Heart right ventricle (tissue), 16 donors: ENCODE measurements at regions of chr3 and their contacts with region 1.

Region 1: GRCh38 chr3:188954590-188955208 is 217.1 kb upstream of the TPRG1 start:
- DNase-seq: peak; percentile 81 to 91
- ATAC-seq: peak; percentile 75 to 90 (median 86)
- H3K4me3 ChIP-seq: no peak overlapping the region
- H3K27ac ChIP-seq: peak overlapping the region in 3 of 10 donors; percentile 9 to 71 (median 28)
- H3K4me1 ChIP-seq: peaks cover 0 to 47% (median 32%) of the 10 kb centered on the region in 9 donors
- H3K27me3 ChIP-seq: no peaks in the 10 kb centered on the region
- CTCF ChIP-seq: peak in 8 of 9 donors; percentile 81 to 98 (median 96)

Region 2: GRCh38 chr3:188037216-188037718 is 917.4 kb before region 1 on chr3:
- intact Hi-C with region 1: loop called in 3 of 10 experiments (anchors 5 to 10 kb)
- DNase-seq: peak in 1 of 2 donors; percentile 28
- ATAC-seq: peak; percentile 66 to 92 (median 86)
- H3K4me3 ChIP-seq: peak overlapping the region in 4 of 10 donors; percentile 3 to 24 (median 16)
- H3K27ac ChIP-seq: peak overlapping the region in 8 of 10 donors; percentile 26 to 70 (median 54)
- H3K4me1 ChIP-seq: peaks cover 0 to 19% (median 13%) of the 10 kb centered on the region in 9 donors
- H3K27me3 ChIP-seq: no peaks in the 10 kb centered on the region
- CTCF ChIP-seq: peak; percentile 18 to 67 (median 50)

Region 3: DNA sequence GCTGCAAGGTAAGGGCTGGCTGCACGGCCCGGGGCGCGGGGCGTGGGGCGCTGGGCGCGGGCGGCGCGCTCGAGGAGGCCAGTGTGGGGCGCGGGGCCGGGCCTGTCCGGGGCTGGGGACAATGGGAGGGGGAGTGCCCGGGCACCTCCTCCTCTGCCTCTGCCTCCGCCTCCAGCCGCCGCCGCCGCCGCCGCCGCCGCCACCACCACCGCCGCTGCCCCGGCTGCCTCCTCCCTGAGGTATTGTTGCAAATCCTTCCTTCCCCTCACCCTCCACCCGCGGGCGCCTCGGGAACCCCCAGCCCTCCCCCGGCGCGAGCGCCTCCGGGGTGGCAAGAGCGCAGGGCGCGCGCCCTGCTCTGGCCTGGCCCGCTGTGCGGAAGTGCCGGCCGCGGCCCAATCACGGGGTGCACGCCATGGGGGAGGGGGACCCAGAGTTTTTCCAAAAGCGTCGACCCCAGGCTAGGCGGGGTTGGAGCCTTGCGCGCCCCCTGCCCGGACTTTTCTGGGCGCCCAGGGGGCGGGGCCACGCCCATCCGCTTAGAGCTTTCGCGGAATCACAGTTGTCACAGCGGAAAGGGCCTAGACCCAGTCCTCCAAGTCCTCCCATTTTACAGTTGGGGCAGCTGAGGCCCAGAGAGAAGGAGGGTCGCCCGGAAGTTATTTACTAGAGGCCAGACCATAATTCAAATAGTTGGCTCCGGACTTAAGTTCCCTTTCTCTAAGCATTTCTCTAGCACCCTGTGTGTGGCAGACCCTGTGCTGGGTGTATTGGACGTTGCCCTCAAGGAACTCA is 800.5 kb before region 1 on chr3 and contains the start of gene LPP:
- intact Hi-C with region 1: loop called in 6 of 10 experiments (anchors 2 to 10 kb)
- DNase-seq: peak; percentile 76 to 82
- ATAC-seq: peak; percentile 72 to 93 (median 82)
- H3K4me3 ChIP-seq: peak within 1 kb of the TSS; percentile 66 to 92 (median 80)
- H3K27ac ChIP-seq: peak within 1 kb of the TSS; percentile 90 to 99 (median 96)
- H3K4me1 ChIP-seq: peaks cover 0 to 67% (median 54%) of the 10 kb centered on the region in 9 donors
- H3K27me3 ChIP-seq: no peaks in the 10 kb centered on the region
- CTCF ChIP-seq: peak in 2 of 9 donors; percentile 23 to 26
- total RNA-seq, gene LPP: 116 to 188 (median 148) TPM

Region 4: GRCh38 chr3:188286087-188286513 is 668.6 kb before region 1 on chr3:
- intact Hi-C with region 1: loop called in 1 of 10 experiments (anchors 10 kb)
- DNase-seq: peak in 1 of 2 donors; percentile 59
- ATAC-seq: peak; percentile 70 to 93 (median 81)
- H3K4me3 ChIP-seq: no peak overlapping the region
- H3K27ac ChIP-seq: peak overlapping the region; percentile 20 to 85 (median 74)
- H3K4me1 ChIP-seq: peaks cover 15 to 85% (median 65%) of the 10 kb centered on the region in 9 donors
- H3K27me3 ChIP-seq: no peaks in the 10 kb centered on the region
- CTCF ChIP-seq: no peak

Region 5: GRCh38 chr3:188348435-188349244 is 606.1 kb before region 1 on chr3:
- intact Hi-C with region 1: loop called in 5 of 10 experiments (anchors 2 to 10 kb)
- DNase-seq: peak; percentile 69 to 74
- ATAC-seq: peak; percentile 71 to 83 (median 76)
- H3K4me3 ChIP-seq: no peak overlapping the region
- H3K27ac ChIP-seq: peak overlapping the region; percentile 23 to 81 (median 63)
- H3K4me1 ChIP-seq: peaks cover 8 to 70% (median 45%) of the 10 kb centered on the region in 9 donors
- H3K27me3 ChIP-seq: no peaks in the 10 kb centered on the region
- CTCF ChIP-seq: no peak

Region 6: GRCh38 chr3:188749010-188749617 is 205.6 kb before region 1 on chr3:
- intact Hi-C with region 1: no loop called
- DNase-seq: no peak
- ATAC-seq: no peak
- H3K4me3 ChIP-seq: no peak overlapping the region
- H3K27ac ChIP-seq: no peak overlapping the region
- H3K4me1 ChIP-seq: peaks cover 0 to 22% (median 0%) of the 10 kb centered on the region in 9 donors
- H3K27me3 ChIP-seq: no peaks in the 10 kb centered on the region
- CTCF ChIP-seq: peak in 8 of 9 donors; percentile 7 to 65 (median 33)

Region 7: DNA sequence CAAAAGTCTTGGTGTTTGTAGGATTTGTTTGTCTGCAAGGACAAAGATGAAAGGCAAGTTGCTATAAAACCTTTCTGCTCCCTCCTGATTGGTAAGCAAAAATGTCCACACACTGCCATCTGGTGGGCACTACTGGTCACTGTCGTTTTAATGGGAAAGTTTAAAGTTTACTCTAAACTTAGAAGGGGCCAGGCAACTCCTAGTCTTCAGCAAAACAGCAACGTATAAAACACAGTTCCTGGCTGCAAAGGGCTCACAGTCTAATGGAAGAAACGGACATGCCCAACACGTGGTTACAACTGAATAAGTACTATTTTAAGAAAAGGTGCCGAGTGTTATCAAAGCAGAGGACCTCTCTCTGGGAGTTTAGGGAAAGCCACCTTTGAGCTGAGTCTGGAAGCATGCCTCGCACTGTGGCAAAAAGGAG is 193.4 kb after region 1 on chr3:
- intact Hi-C with region 1: loop called in 8 of 10 experiments (anchors 2 to 10 kb)
- DNase-seq: peak; percentile 23 to 68
- ATAC-seq: peak; percentile 56 to 79 (median 70)
- H3K4me3 ChIP-seq: no peak overlapping the region
- H3K27ac ChIP-seq: peak overlapping the region in 2 of 10 donors; percentile 11 to 46
- H3K4me1 ChIP-seq: peaks cover 0 to 32% (median 7%) of the 10 kb centered on the region in 9 donors
- H3K27me3 ChIP-seq: no peaks in the 10 kb centered on the region
- CTCF ChIP-seq: peak; percentile 68 to 85 (median 78)

Region 8: GRCh38 chr3:189195302-189195701 is 240.6 kb after region 1 on chr3:
- intact Hi-C with region 1: no loop called
- DNase-seq: no peak
- ATAC-seq: no peak
- H3K4me3 ChIP-seq: no peak overlapping the region
- H3K27ac ChIP-seq: no peak overlapping the region
- H3K4me1 ChIP-seq: no peaks in the 10 kb centered on the region
- H3K27me3 ChIP-seq: no peaks in the 10 kb centered on the region
- CTCF ChIP-seq: no peak